ENCODE measurements at regions of chr15 and their contacts with region 1.

Region 1: GRCh38 chr15:71575474-71576045 is 234.8 kb upstream of the NR2E3 start:
- DNase-seq: no peak

Region 2: DNA sequence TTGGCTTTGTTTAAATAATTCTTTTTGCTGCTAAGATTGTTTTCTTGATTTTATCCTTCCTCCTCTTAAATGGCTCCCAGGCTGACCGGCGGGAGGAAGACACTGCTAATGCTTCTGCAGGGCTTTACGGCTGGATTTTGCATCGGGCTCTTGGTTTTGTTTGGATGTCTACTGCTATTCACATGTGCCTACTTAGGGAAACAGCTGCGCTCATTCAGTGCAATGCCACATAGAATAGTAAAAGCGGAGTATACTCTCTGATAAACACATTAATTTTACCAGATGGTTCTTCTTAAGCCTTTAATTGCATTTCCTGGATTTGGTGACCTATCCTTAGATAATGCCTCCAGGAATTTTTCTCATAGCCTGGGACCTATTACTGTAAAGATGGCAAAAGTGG is 313.7 kb before region 1 on chr15:
- intact Hi-C with region 1: no loop called
- DNase-seq: no peak

Region 3: GRCh38 chr15:71424765-71425164 is 150.8 kb before region 1 on chr15:
- intact Hi-C with region 1: no loop called
- DNase-seq: no peak

Region 4: DNA sequence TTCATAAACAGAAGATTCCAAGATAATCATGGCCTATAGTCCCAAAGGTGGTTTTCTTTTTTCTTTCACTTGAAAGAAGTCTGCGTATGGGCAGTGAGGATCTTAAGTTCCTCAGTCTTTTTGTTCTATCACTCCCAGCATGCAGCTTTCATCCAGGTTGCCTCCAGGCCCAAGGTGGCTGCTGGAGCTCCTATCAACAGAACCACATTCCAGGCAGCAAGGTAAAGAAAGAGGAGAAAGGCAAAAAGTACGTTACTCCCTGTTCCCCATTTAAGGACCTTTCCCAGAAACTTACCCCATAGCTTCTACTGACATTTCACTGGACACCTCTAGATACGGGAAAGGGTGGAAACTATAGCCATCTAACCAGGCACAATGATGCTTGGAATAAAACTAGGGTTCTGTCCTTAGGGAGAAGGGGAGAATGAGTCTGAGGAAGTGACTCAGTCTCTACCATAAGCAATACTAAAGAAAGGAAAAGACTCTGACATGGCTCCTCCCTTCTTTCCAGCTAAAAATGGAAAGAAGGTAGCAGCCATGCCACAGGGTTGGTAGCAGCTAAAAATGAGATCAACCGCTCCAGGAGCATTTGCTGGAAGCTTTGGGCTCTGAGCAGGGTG is 79.1 kb before region 1 on chr15:
- intact Hi-C with region 1: loop called in 1 of 2 experiments (anchors 2 kb)
- DNase-seq: no peak

Region 5: DNA sequence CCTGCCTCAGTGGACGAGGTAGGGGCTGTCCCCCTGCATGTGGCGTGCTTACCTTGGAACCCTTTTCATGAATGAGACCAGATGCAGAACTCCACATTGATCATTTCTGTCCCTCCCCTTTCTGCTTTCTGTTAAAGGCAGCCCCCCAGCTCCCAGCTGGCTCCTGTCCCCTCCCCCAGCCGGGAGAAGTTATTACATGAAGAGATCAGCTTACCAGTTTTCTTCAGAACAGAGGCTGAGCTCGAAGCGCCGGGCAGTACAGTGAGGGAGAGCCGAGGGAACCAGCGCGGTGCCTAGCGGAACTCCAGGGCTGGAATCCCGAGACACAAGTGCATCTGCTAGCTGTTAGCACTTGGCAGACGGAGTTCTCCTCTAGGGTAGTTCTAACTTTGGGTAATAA is 28.5 kb before region 1 on chr15:
- intact Hi-C with region 1: loop called in 1 of 2 experiments (anchors 2 kb)
- DNase-seq: no peak

Region 6: GRCh38 chr15:71559098-71559497 is 16.5 kb before region 1 on chr15:
- intact Hi-C with region 1: no loop called
- DNase-seq: no peak

Measured in posterior vena cava (tissue), 2 donors.